Activated CD8-positive, alpha-beta T cell treated with anti-CD3 and anti-CD28 coated beads, Interleukin-2, amount 10 ng/mL, durations not matched to agents 7 days and 5 days (primary cell): ENCODE measurements at regions of chr2 and their contacts with region 1.

Region 1: GRCh38 chr2:196453613-196454047 is 185.9 kb upstream of the CCDC150 start:
- DNase-seq: peak; percentile 66
- ATAC-seq: peak; percentile 67
- H3K4me3 Mint-ChIP-seq: no peak overlapping the region
- H3K27ac Mint-ChIP-seq: no peak overlapping the region
- H3K4me1 Mint-ChIP-seq: peaks cover 5% of the 10 kb centered on the region
- H3K27me3 Mint-ChIP-seq: peaks cover 29% of the 10 kb centered on the region

Region 2: DNA sequence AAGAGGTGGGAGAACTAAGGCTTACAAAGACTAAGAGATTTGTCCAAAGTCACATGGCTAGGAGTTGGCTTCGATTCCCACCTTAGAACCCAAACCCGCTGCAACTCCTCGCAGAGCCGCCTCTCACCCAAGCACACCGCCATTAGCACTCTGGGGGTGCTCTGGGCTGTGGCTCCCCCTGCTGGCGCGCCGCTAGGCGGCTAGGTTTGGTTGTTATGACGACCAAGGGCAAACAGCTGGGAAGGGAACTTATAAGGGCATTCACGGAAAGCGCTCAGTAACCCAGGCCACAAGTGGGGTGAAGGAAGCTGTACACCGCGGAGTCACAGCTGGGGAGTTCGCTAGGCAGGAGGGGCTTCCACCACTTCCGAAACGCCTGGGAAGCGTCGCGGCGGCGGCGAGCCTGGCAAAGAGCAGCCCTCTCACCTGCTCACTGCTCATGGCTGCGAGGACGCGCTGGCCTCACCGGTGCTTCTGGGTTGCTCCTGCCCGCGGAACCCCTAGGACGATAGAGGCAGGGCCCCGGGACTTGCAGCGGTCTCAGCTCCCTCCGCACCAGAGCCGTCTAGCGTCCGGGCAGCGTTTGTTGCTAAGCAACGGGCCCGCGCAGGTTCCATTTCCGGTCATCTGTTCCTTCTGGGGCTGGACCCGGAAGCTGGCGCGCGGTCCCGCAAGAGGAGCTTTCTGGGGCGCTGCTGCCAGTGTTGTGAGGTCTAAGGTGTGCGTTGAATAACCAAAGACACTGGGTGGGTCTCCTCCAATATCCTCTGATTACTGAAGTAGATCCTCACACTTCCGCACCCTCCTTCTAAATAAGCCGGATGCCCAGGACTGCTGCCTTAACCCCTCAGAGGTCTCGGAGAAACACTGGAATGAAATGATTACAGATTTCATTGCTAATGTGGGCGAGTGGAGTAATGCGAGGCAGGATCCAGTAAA is 385.1 kb before region 1 on chr2 and contains the start of gene DNAH7:
- CTCF ChIA-PET with region 1: interaction called, 19 read pairs
- POLR2A ChIA-PET with region 1: no interaction called
- DNase-seq: peak; percentile 96
- ATAC-seq: peak; percentile 96
- H3K4me3 Mint-ChIP-seq: peak within 1 kb of the TSS; percentile 79
- H3K27ac Mint-ChIP-seq: peak within 1 kb of the TSS; percentile 75
- H3K4me1 Mint-ChIP-seq: peaks cover 19% of the 10 kb centered on the region
- H3K27me3 Mint-ChIP-seq: peaks cover 16% of the 10 kb centered on the region
- total RNA-seq, gene DNAH7: not detected

Region 3: DNA sequence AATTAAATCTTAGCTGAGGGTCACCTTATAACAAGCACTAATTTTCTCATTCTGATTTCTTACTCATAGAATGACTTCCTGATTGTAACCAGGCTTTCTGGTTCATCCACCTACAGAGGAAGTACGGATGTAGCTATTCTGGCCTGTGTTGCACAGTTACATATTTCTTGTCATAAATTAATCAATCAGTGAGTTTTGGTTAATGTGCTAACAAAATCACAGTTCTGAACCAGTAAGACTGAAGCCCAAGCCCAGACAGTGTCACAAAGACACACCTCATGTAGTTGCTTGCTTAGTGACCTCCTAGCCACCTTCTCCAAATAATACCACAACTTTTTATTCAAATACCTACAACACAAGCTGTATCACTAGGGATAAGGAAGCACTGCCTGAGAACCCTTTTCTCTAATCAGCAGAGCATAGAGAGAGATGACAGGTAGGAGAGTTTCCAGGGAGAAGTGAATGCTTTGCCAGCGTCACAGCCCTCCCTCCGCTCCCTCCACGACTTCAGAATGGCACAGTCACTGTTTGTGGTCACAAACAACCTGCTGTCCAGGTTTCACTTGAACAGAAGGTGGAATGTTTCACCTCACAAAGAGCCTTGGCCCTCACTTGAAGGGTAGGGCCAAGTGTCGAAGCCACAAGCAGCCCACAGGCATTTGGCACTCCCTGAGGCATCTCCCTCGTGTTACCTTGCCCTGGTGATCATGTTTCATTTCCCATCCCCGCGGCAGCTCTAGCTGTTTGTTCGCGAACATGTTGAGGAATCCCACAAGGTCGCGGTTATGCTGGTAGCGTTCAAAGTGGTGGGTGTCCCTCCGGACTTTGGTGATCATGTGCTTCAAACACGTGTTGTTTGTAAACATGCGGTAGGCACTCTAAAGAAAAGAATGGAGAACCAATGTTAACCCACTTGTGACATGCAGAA is 161.5 kb before region 1 on chr2:
- CTCF ChIA-PET with region 1: interaction called, 14 read pairs
- POLR2A ChIA-PET with region 1: no interaction called
- DNase-seq: no peak
- ATAC-seq: peak; percentile 20
- H3K4me3 Mint-ChIP-seq: no peak overlapping the region
- H3K27ac Mint-ChIP-seq: peak overlapping the region; percentile 16
- H3K4me1 Mint-ChIP-seq: peaks cover 50% of the 10 kb centered on the region
- H3K27me3 Mint-ChIP-seq: no peaks in the 10 kb centered on the region

Region 4: DNA sequence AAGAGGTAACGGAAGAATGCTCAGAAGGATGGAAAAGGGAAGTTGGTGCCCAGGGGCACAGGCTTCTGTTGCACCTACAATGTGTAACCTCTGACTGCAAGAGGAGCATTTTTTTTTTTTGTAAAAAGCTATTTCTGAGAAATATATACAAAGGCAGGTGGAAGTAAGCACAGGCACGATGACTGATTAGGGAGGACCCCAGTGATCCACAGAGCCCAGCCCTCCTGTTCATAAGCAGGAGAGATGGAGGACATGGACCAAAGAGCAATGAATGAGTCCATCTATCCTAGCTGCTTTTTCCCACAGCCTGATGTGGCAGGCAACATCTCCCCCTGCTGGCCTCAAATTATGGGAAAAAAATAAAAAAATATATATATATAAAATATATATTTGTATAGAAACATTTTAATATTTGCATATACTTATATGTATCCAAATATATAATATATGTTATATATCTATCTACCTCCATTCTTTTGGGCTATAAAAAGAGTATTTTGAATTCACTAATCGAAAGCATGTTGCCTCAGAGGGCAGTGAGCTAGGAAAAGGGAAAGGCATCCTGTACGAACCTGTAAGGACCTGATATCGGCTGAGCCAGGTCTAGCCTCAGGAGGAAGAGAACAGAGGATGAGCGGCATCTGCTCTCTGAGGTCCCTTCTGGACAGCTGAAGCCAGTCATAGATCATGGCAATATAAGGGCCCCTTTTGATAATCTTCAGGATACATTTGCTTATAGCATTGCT is 116.2 kb before region 1 on chr2:
- CTCF ChIA-PET with region 1: interaction called, 11 read pairs
- POLR2A ChIA-PET with region 1: no interaction called
- DNase-seq: peak; percentile 34
- ATAC-seq: peak; percentile 39
- H3K4me3 Mint-ChIP-seq: no peak overlapping the region
- H3K27ac Mint-ChIP-seq: no peak overlapping the region
- H3K4me1 Mint-ChIP-seq: peaks cover 4% of the 10 kb centered on the region
- H3K27me3 Mint-ChIP-seq: peaks cover 7% of the 10 kb centered on the region

Region 5: GRCh38 chr2:196426122-196426521 is 27.5 kb before region 1 on chr2:
- CTCF ChIA-PET with region 1: interaction called, 11 read pairs
- POLR2A ChIA-PET with region 1: no interaction called
- DNase-seq: no peak
- ATAC-seq: no peak
- H3K4me3 Mint-ChIP-seq: no peak overlapping the region
- H3K27ac Mint-ChIP-seq: no peak overlapping the region
- H3K4me1 Mint-ChIP-seq: peaks cover 10% of the 10 kb centered on the region
- H3K27me3 Mint-ChIP-seq: peaks cover 5% of the 10 kb centered on the region

Region 6: DNA sequence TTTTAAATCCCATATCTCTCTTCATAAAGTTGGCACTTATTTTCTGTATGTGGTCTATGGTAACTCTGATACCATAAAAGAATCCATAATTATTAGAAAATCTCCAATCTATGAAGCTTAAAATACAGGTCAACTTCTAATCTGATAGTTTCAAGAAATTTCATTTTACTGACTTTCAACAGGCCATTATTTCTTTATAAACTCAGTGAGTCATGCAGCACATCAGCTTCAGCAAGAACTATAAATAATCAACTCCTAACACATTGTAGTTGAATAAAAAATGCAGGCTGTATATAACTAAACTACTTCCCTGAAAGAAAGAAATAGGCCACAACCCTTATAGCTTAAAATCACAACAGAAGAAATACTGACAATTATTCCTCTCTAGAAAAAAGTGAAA is 18.4 kb before region 1 on chr2:
- CTCF ChIA-PET with region 1: interaction called, 13 read pairs
- POLR2A ChIA-PET with region 1: no interaction called
- DNase-seq: no peak
- ATAC-seq: no peak
- H3K4me3 Mint-ChIP-seq: no peak overlapping the region
- H3K27ac Mint-ChIP-seq: no peak overlapping the region
- H3K4me1 Mint-ChIP-seq: no peaks in the 10 kb centered on the region
- H3K27me3 Mint-ChIP-seq: peaks cover 30% of the 10 kb centered on the region